ENCODE measurements at regions of chr7 and their contacts with region 1.

Region 1: GRCh38 chr7:135977007-135977741 is at the start of gene MTPN:
- DNase-seq: peak; percentile 95 to 98 (median 97)
- H3K4me3 ChIP-seq: peak within 1 kb of the TSS; percentile 82 to 90
- H3K4me3 Mint-ChIP-seq: peak within 1 kb of the TSS; percentile 89 to 100 (median 96)
- H3K27ac ChIP-seq: peak within 1 kb of the TSS; percentile 93
- H3K27ac Mint-ChIP-seq: peak within 1 kb of the TSS; percentile 89 to 98 (median 95)
- H3K4me1 ChIP-seq: peaks cover 88% of the 10 kb centered on the region
- H3K4me1 Mint-ChIP-seq: peaks cover 59 to 94% (median 76%) of the 10 kb centered on the region in 4 donors
- H3K27me3 ChIP-seq: no peaks in the 10 kb centered on the region
- H3K27me3 Mint-ChIP-seq: no peaks in the 10 kb centered on the region
- total RNA-seq, gene MTPN: 83.1 to 84.5 TPM

Region 2: GRCh38 chr7:135238112-135238744 is 738.9 kb before region 1 on chr7:
- CTCF ChIA-PET with region 1: no interaction called
- POLR2A ChIA-PET with region 1: no interaction called
- intact Hi-C with region 1: no loop called
- DNase-seq: no peak
- H3K4me3 ChIP-seq: no peak overlapping the region
- H3K4me3 Mint-ChIP-seq: no peak overlapping the region
- H3K27ac ChIP-seq: no peak overlapping the region
- H3K27ac Mint-ChIP-seq: no peak overlapping the region
- H3K4me1 ChIP-seq: no peaks in the 10 kb centered on the region
- H3K4me1 Mint-ChIP-seq: peaks cover 0 to 3% (median 1%) of the 10 kb centered on the region in 4 donors
- H3K27me3 ChIP-seq: no peaks in the 10 kb centered on the region
- H3K27me3 Mint-ChIP-seq: peaks cover 3 to 5% of the 10 kb centered on the region in 2 donors

Region 3: DNA sequence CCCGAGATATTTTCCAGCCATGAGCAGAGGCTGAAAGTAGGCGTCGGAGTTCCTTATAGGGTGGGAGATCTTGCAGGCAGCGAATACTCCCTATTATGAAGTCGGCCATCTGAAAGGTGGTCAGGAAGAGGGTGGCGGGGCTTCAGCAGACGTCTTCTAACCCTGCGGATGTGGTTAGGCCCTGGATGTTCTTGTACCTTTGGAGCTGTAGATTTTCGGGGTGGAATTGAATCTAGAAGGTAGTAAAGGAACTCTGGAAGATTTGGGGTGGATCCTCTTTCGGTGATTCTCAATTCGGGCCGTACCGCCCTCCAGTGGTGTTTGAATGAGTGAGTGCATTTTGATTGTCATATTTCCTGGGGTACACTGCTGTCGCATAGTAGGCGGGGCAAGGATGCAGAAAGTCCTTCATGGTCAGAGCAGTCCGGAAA is 418.8 kb before region 1 on chr7:
- CTCF ChIA-PET with region 1: no interaction called
- POLR2A ChIA-PET with region 1: no interaction called
- intact Hi-C with region 1: loop called (anchors 1 kb)
- DNase-seq: peak; percentile 68 to 80 (median 70)
- H3K4me3 ChIP-seq: peak overlapping the region; percentile 92 to 96
- H3K4me3 Mint-ChIP-seq: no peak overlapping the region
- H3K27ac ChIP-seq: peak overlapping the region; percentile 92
- H3K27ac Mint-ChIP-seq: no peak overlapping the region
- H3K4me1 ChIP-seq: peaks cover 24% of the 10 kb centered on the region
- H3K4me1 Mint-ChIP-seq: peaks cover 17 to 23% (median 19%) of the 10 kb centered on the region in 4 donors
- H3K27me3 ChIP-seq: no peaks in the 10 kb centered on the region
- H3K27me3 Mint-ChIP-seq: peaks cover 0 to 2% of the 10 kb centered on the region in 2 donors

Region 4: GRCh38 chr7:135704074-135704473 is 273.1 kb before region 1 on chr7:
- CTCF ChIA-PET with region 1: no interaction called
- POLR2A ChIA-PET with region 1: no interaction called
- intact Hi-C with region 1: no loop called
- DNase-seq: no peak
- H3K4me3 ChIP-seq: no peak overlapping the region
- H3K4me3 Mint-ChIP-seq: no peak overlapping the region
- H3K27ac ChIP-seq: no peak overlapping the region
- H3K27ac Mint-ChIP-seq: peak overlapping the region in 2 of 7 donors; percentile 13 to 56
- H3K4me1 ChIP-seq: no peaks in the 10 kb centered on the region
- H3K4me1 Mint-ChIP-seq: peaks cover 0 to 3% (median 0%) of the 10 kb centered on the region in 4 donors
- H3K27me3 ChIP-seq: no peaks in the 10 kb centered on the region
- H3K27me3 Mint-ChIP-seq: no peaks in the 10 kb centered on the region

Region 5: GRCh38 chr7:135993950-135994349 is 16.8 kb after region 1 on chr7:
- CTCF ChIA-PET with region 1: interaction called, 12 read pairs
- POLR2A ChIA-PET with region 1: interaction called, 15 read pairs
- intact Hi-C with region 1: no loop called
- DNase-seq: peak in 2 of 5 donors; percentile 13 to 28
- H3K4me3 ChIP-seq: no peak overlapping the region
- H3K4me3 Mint-ChIP-seq: peak overlapping the region in 5 of 8 donors; percentile 9 to 65 (median 49)
- H3K27ac ChIP-seq: no peak overlapping the region
- H3K27ac Mint-ChIP-seq: peak overlapping the region in 6 of 7 donors; percentile 27 to 81 (median 75)
- H3K4me1 ChIP-seq: peaks cover 28% of the 10 kb centered on the region
- H3K4me1 Mint-ChIP-seq: peaks cover 13 to 30% (median 22%) of the 10 kb centered on the region in 4 donors
- H3K27me3 ChIP-seq: no peaks in the 10 kb centered on the region
- H3K27me3 Mint-ChIP-seq: no peaks in the 10 kb centered on the region

Measured in CD4-positive, alpha-beta memory T cell (primary cell).